ENCODE measurements at regions of chr9 and their contacts with region 1.

Region 1: DNA sequence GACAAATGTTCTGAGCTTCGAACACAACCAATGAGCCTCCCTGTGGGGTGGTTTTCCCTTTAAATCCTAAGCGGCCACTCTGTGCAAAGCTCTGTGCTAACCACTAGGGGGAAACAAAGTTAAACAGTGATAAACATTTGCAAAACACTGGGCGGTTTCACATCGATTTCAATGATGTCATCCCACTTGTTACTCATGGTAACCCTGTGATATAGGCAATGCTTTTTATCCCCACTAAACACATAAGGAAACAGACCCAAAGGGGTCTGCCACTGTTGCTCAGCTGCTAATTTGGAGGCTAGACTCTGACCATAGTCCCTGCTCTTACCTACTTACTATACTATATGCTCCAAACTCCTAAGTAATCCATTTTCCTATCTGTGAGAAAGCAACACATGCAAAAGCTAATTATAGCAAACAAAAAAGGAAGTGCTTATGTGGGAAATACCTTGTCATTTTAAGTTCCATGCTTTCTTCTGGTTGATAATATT is 57.3 kb downstream of the PTPN3 start:
- DNase-seq: peak; percentile 80
- CTCF ChIP-seq: peak; percentile 79

Region 2: GRCh38 chr9:109401168-109401989 is 39.5 kb before region 1 on chr9:
- CTCF ChIA-PET with region 1: interaction called, 24 read pairs
- POLR2A ChIA-PET with region 1: interaction called, 3 read pairs
- DNase-seq: peak; percentile 70
- CTCF ChIP-seq: peak; percentile 87

Region 3: GRCh38 chr9:109422641-109423040 is 18.2 kb before region 1 on chr9:
- CTCF ChIA-PET with region 1: interaction called, 42 read pairs
- POLR2A ChIA-PET with region 1: no interaction called
- DNase-seq: peak; percentile 59
- CTCF ChIP-seq: no peak

Region 4: GRCh38 chr9:109453210-109453842 is 12.5 kb after region 1 on chr9:
- CTCF ChIA-PET with region 1: interaction called, 84 read pairs
- POLR2A ChIA-PET with region 1: no interaction called
- DNase-seq: no peak
- CTCF ChIP-seq: no peak

Region 5: DNA sequence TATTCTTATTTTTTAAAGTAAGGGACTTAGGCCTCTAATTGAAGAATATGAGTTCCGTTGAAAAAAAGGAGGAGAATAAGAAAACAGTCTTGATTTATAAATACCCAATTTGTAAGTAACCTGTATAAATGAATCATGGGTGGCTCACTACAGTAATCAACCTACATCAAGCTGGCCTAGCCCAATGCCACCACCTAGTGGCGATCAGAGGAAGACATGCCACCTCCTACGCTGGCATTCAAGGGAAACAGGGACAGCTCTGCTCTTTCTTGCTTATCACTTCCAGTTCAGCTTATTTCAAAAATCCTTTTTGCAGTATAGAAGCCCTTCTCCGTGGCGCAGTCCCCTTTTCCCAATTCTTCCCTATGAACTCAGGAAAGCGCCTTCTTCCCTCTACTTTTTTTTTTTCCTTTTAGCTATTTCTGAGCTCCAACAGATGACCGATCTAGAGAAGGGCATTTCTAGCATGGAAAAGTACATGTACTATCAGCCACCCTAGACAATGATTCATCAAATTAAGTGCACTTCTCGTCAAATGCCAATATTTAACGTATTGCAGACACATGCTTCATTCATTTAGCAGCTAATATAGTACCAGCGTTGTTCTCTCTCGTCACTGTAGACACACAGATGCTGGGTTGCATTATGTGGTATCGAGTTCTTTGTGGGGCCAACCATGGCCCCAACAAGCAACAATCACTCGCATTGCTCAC is 29.0 kb after region 1 on chr9:
- CTCF ChIA-PET with region 1: interaction called, 68 read pairs
- POLR2A ChIA-PET with region 1: no interaction called
- DNase-seq: peak; percentile 78
- CTCF ChIP-seq: peak; percentile 93